ENCODE measurements at regions of chr10 and their contacts with region 1.

Region 1: GRCh38 chr10:72048450-72049124 is 39.8 kb downstream of the SPOCK2 start:
- DNase-seq: peak; percentile 89 to 95 (median 92)
- ATAC-seq: peak; percentile 94
- H3K4me3 ChIP-seq: no peak overlapping the region
- H3K27ac ChIP-seq: no peak overlapping the region
- H3K4me1 ChIP-seq: peaks cover 4 to 7% of the 10 kb centered on the region in 2 experiments; a peak in 3 of 5 replicates
- H3K27me3 ChIP-seq: peaks cover 0 to 3% of the 10 kb centered on the region in 2 experiments; a peak in 1 of 5 replicates
- CTCF ChIP-seq: peak; percentile 100
- EP300 ChIP-seq: peak; percentile 29; the same call in 1 of the 2 replicates
- POLR2A ChIP-seq: no peak
- RAD21 ChIP-seq: peak; percentile 100

Region 2: DNA sequence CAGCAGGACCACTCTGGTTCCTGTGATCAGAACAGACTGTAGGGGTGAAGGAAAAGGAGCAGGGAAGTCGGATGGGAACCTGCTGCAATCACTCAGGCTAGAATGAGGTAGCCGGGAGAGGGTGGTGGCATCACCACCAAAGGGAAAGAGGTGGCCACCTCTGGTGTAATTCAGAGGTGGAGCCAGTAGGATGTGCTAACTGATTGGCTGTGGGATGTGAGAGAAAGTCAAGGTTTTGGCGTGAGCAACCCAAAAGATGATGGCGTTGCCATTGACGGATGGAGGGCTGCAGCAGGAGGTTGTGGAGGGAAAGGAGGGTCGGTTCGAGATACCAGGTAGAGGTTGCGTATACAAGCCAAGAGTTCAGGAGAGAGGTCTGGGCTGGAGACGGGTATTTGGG is 267.9 kb before region 1 on chr10:
- CTCF ChIA-PET with region 1: no interaction called
- POLR2A ChIA-PET with region 1: no interaction called
- in situ Hi-C with region 1: no loop called
- intact Hi-C with region 1: loop called (anchors 1 kb)
- DNase-seq: peak; percentile 38 to 66 (median 50)
- ATAC-seq: peak; percentile 68
- H3K4me3 ChIP-seq: no peak overlapping the region
- H3K27ac ChIP-seq: no peak overlapping the region
- H3K4me1 ChIP-seq: peaks cover 0 to 3% of the 10 kb centered on the region in 2 experiments; a peak in 2 of 5 replicates
- H3K27me3 ChIP-seq: peaks cover 26 to 57% of the 10 kb centered on the region in 2 experiments
- CTCF ChIP-seq: peak; percentile 67 to 78 (median 68)
- EP300 ChIP-seq: no peak
- POLR2A ChIP-seq: no peak
- RAD21 ChIP-seq: peak; percentile 65 to 83

Region 3: GRCh38 chr10:71893920-71894319 is 154.7 kb before region 1 on chr10:
- CTCF ChIA-PET with region 1: interaction called, 159 read pairs
- POLR2A ChIA-PET with region 1: interaction called, 4 read pairs
- in situ Hi-C with region 1: loop called (anchors 5 kb)
- intact Hi-C with region 1: loop called (anchors 1 kb)
- DNase-seq: peak; percentile 54 to 94 (median 73)
- ATAC-seq: peak; percentile 94
- H3K4me3 ChIP-seq: no peak overlapping the region
- H3K27ac ChIP-seq: no peak overlapping the region
- H3K4me1 ChIP-seq: peaks cover 21 to 28% of the 10 kb centered on the region in 2 experiments
- H3K27me3 ChIP-seq: no peaks in the 10 kb centered on the region
- CTCF ChIP-seq: no peak
- EP300 ChIP-seq: peak; percentile 91
- POLR2A ChIP-seq: no peak
- RAD21 ChIP-seq: peak in 1 of 2 experiments; percentile 39; a peak in 2 of 4 replicates

Region 4: GRCh38 chr10:71957546-71958275 is 90.9 kb before region 1 on chr10:
- CTCF ChIA-PET with region 1: no interaction called
- POLR2A ChIA-PET with region 1: no interaction called
- in situ Hi-C with region 1: no loop called
- intact Hi-C with region 1: loop called (anchors 1 kb)
- DNase-seq: peak in 1 of 4 experiments; percentile 47
- ATAC-seq: peak; percentile 51; the same call in 1 of the 3 replicates
- H3K4me3 ChIP-seq: no peak overlapping the region
- H3K27ac ChIP-seq: no peak overlapping the region
- H3K4me1 ChIP-seq: peaks cover 0 to 4% of the 10 kb centered on the region in 2 experiments; a peak in 2 of 5 replicates
- H3K27me3 ChIP-seq: peaks cover 9 to 15% of the 10 kb centered on the region in 2 experiments; a peak in 3 of 5 replicates
- CTCF ChIP-seq: peak; percentile 28 to 48 (median 45); a peak in 5 of 6 replicates
- EP300 ChIP-seq: no peak
- POLR2A ChIP-seq: no peak
- RAD21 ChIP-seq: no peak

Region 5: DNA sequence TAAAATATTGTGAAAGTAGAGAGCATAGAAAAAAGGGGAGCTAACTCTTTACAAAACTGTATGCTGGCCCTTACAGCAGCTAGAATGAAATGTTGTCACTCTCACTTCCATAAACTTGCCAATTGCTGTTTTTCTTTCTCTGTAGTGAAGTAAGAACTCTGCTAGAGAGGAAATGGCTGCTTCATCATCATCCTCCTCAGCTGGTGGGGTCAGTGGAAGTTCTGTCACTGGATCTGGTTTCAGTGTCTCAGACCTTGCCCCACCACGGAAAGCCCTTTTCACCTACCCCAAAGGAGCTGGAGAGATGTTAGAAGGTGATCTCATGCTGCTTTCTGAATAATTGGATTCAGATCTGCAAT is 175.1 kb after region 1 on chr10:
- CTCF ChIA-PET with region 1: interaction called, 14 read pairs
- POLR2A ChIA-PET with region 1: interaction called, 4 read pairs
- in situ Hi-C with region 1: no loop called
- intact Hi-C with region 1: loop called (anchors 1 kb)
- DNase-seq: no peak
- ATAC-seq: no peak
- H3K4me3 ChIP-seq: no peak overlapping the region
- H3K27ac ChIP-seq: no peak overlapping the region
- H3K4me1 ChIP-seq: peaks cover 4 to 15% of the 10 kb centered on the region in 2 experiments; a peak in 3 of 5 replicates
- H3K27me3 ChIP-seq: no peaks in the 10 kb centered on the region
- CTCF ChIP-seq: no peak
- EP300 ChIP-seq: no peak
- POLR2A ChIP-seq: no peak
- RAD21 ChIP-seq: no peak

Region 6: DNA sequence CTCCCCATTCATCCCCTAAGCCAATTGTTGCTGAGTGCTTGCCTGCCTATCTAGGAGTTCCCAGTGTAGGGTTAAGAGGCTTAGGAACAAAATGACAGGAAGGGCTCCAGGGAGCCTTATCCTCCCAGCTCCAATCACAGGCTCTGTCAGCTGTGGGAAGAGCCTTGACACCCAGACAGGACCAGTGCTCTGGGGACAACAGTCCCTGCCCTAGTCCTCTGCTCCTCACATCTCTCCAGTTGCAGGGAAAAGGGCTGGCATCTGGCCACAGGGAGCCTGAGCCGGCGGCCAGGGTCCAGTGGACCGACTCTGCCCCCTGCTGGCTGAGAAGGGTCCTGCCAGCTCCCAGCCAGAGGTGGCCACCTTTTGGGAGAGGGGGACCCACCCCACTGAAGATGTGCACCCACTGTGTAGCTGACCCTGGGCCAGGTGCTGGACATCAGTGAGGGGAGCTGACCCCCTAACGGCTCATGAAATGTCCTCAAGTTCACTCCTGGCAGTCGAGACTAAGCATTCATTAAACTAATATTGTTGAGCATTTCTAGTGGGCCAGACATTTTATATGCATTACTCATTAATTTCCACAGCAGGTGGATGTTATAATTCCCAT is 288.5 kb after region 1 on chr10:
- CTCF ChIA-PET with region 1: interaction called, 22 read pairs
- POLR2A ChIA-PET with region 1: no interaction called
- in situ Hi-C with region 1: no loop called
- intact Hi-C with region 1: no loop called
- DNase-seq: peak; percentile 76 to 88 (median 81)
- ATAC-seq: peak; percentile 81
- H3K4me3 ChIP-seq: no peak overlapping the region
- H3K27ac ChIP-seq: no peak overlapping the region
- H3K4me1 ChIP-seq: peaks cover 2 to 36% of the 10 kb centered on the region in 2 experiments; a peak in 2 of 5 replicates
- H3K27me3 ChIP-seq: no peaks in the 10 kb centered on the region
- CTCF ChIP-seq: peak; percentile 91 to 99 (median 93)
- EP300 ChIP-seq: no peak
- POLR2A ChIP-seq: peak; percentile 29; the same call in 1 of the 2 replicates
- RAD21 ChIP-seq: peak; percentile 95 to 97

Measured in K562 (cell line).